Activated B cell treated with CpG ODN at 0.5 μM for 24 hours (primary cell): ENCODE measurements at regions of chr20 and their contacts with region 1.

Region 1: GRCh38 chr20:18466894-18467730 is at the starts of genes DZANK1 and POLR3F:
- DNase-seq: peak; percentile 88
- ATAC-seq: peak; percentile 96
- H3K4me3 Mint-ChIP-seq: peak within 1 kb of the TSS; percentile 99
- H3K27ac Mint-ChIP-seq: peak within 1 kb of the TSS; percentile 95
- H3K4me1 Mint-ChIP-seq: peaks cover 27% of the 10 kb centered on the region
- H3K27me3 Mint-ChIP-seq: no peaks in the 10 kb centered on the region
- CTCF ChIP-seq: no peak
- total RNA-seq, gene DZANK1: 5.3 and 6.0 TPM in 2 replicates
- total RNA-seq, gene POLR3F: 13.3 and 14.5 TPM in 2 replicates

Region 2: GRCh38 chr20:18496740-18497592 is 29.9 kb after region 1 on chr20 and contains the start of gene RBBP9:
- CTCF ChIA-PET with region 1: interaction called, 5 read pairs
- POLR2A ChIA-PET with region 1: interaction called, 32 read pairs
- intact Hi-C with region 1: loop called (anchors 1 kb)
- DNase-seq: peak; percentile 67
- ATAC-seq: peak; percentile 99
- H3K4me3 Mint-ChIP-seq: peak within 1 kb of the TSS; percentile 99
- H3K27ac Mint-ChIP-seq: peak within 1 kb of the TSS; percentile 87
- H3K4me1 Mint-ChIP-seq: peaks cover 16% of the 10 kb centered on the region
- H3K27me3 Mint-ChIP-seq: peaks cover 3% of the 10 kb centered on the region
- CTCF ChIP-seq: no peak
- total RNA-seq, gene RBBP9: 10.6 TPM in 2 replicates

Region 3: GRCh38 chr20:18566892-18567742 is 100.0 kb after region 1 on chr20 and contains the start of gene SMIM26:
- CTCF ChIA-PET with region 1: no interaction called
- POLR2A ChIA-PET with region 1: interaction called, 6 read pairs
- intact Hi-C with region 1: loop called (anchors 1 kb)
- DNase-seq: peak; percentile 91
- ATAC-seq: peak; percentile 96
- H3K4me3 Mint-ChIP-seq: peak within 1 kb of the TSS; percentile 94
- H3K27ac Mint-ChIP-seq: peak within 1 kb of the TSS; percentile 94
- H3K4me1 Mint-ChIP-seq: peaks cover 23% of the 10 kb centered on the region
- H3K27me3 Mint-ChIP-seq: no peaks in the 10 kb centered on the region
- CTCF ChIP-seq: no peak
- total RNA-seq, gene SMIM26: 48.9 and 51.7 TPM in 2 replicates